SK-N-SH (cell line): ENCODE measurements at regions of chr17 and their contacts with region 1.

Region 1: DNA sequence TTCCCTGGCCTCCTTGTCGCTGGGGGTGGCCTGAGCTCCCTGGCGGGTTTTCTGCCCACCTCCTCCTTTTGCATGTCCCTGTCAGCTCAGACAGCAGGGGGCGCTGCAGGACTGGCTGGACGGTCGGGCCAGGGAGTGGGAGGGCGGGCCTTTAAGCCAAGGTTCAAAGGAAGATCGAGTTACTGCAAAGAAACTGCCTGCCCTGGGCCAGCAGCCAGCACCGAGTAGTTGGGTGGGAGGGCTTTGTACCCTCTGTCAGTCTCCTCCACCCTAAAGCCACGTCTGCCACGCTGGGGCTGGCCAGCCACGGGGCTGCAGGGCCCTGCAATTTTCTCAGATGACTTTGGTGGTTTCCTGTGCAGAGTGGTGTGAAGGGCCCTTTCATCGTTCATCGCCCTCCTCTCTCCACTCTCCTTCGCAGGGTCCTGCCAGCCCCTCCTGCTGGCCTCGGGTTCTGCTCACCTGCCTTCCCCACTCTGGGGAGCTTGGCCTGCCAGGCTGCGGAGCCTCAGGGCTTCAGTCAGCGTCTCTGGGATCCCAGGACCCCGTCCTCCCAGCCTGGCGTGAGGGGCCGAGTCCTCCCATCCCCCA is 12.3 kb downstream of the GPR142 start:
- DNase-seq: peak; percentile 98
- H3K4me3 ChIP-seq: no peak overlapping the region
- H3K27ac ChIP-seq: no peak overlapping the region
- H3K4me1 ChIP-seq: peaks cover 0 to 2% of the 10 kb centered on the region in 2 experiments; a peak in 1 of 4 replicates
- H3K27me3 ChIP-seq: no peaks in the 10 kb centered on the region
- CTCF ChIP-seq: peak; percentile 52
- EP300 ChIP-seq: no peak
- RAD21 ChIP-seq: peak; percentile 99

Region 2: GRCh38 chr17:74394977-74395376 is 15.4 kb after region 1 on chr17:
- CTCF ChIA-PET with region 1: interaction called, 80 read pairs
- POLR2A ChIA-PET with region 1: interaction called, 3 read pairs
- DNase-seq: no peak
- H3K4me3 ChIP-seq: no peak overlapping the region
- H3K27ac ChIP-seq: no peak overlapping the region
- H3K4me1 ChIP-seq: no peaks in the 10 kb centered on the region; a peak in 1 of 4 replicates
- H3K27me3 ChIP-seq: no peaks in the 10 kb centered on the region
- CTCF ChIP-seq: no peak
- EP300 ChIP-seq: no peak
- RAD21 ChIP-seq: no peak

Region 3: DNA sequence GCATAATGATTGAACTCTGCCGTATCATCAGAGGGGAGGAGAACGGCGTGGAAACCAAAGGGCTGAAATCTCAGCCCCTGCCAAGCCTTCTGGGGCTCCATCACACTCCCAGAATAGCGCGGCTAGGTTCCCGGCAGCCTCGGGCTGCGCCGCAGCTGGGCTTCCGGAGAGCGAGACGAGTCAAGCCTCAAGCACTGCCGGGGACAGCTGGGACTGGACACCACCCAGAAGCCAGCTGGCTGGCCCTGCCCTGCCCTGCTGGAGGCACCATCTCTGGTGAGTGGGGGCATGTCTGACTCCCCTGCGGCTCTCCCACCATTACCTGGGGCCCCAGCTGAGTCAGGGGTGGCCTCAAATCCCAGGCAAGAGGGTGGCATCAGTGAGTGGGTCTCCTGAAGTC is 45.1 kb after region 1 on chr17:
- CTCF ChIA-PET with region 1: interaction called, 17 read pairs
- POLR2A ChIA-PET with region 1: no interaction called
- DNase-seq: peak; percentile 39
- H3K4me3 ChIP-seq: no peak overlapping the region
- H3K27ac ChIP-seq: no peak overlapping the region
- H3K4me1 ChIP-seq: no peaks in the 10 kb centered on the region
- H3K27me3 ChIP-seq: no peaks in the 10 kb centered on the region
- CTCF ChIP-seq: no peak
- EP300 ChIP-seq: no peak
- RAD21 ChIP-seq: no peak

Region 4: GRCh38 chr17:74478420-74479100 is 99.0 kb after region 1 on chr17:
- CTCF ChIA-PET with region 1: interaction called, 71 read pairs
- POLR2A ChIA-PET with region 1: no interaction called
- DNase-seq: peak; percentile 12
- H3K4me3 ChIP-seq: no peak overlapping the region
- H3K27ac ChIP-seq: no peak overlapping the region
- H3K4me1 ChIP-seq: no peaks in the 10 kb centered on the region
- H3K27me3 ChIP-seq: no peaks in the 10 kb centered on the region
- CTCF ChIP-seq: no peak
- EP300 ChIP-seq: no peak
- RAD21 ChIP-seq: no peak

Region 5: DNA sequence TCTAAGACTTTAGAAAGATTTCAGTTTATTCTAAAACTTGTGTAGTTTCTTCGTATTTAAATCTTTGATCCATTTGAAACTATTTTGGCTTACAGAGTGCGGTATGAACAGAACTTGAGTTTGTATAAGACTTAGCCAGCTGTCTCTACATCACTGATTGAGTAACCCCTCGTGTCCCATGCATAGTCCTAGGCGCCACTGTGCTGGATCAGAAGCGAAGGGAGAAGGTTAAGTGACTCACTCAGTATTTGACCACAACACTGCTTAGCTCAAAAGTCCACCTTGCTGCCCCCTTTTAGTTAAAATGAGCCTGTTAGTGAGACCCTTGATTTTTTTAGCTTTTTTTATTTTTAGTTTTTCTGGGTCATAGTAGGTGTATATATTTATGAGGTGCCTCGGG is 123.3 kb after region 1 on chr17:
- CTCF ChIA-PET with region 1: interaction called, 85 read pairs
- POLR2A ChIA-PET with region 1: no interaction called
- DNase-seq: no peak
- H3K4me3 ChIP-seq: no peak overlapping the region
- H3K27ac ChIP-seq: no peak overlapping the region
- H3K4me1 ChIP-seq: no peaks in the 10 kb centered on the region
- H3K27me3 ChIP-seq: no peaks in the 10 kb centered on the region
- CTCF ChIP-seq: no peak
- EP300 ChIP-seq: no peak
- RAD21 ChIP-seq: no peak